ENCODE measurements at regions of chr2 and their contacts with region 1.

Region 1: GRCh38 chr2:69724540-69725159 is 17.3 kb upstream of the ANXA4 start:
- DNase-seq: peak; percentile 66
- H3K27ac ChIP-seq: no peak overlapping the region
- CTCF ChIP-seq: peak; percentile 92

Region 2: GRCh38 chr2:69395866-69396265 is 328.8 kb before region 1 on chr2:
- CTCF ChIA-PET with region 1: no interaction called
- POLR2A ChIA-PET with region 1: no interaction called
- DNase-seq: no peak
- H3K27ac ChIP-seq: no peak overlapping the region
- CTCF ChIP-seq: no peak

Region 3: GRCh38 chr2:69619725-69620124 is 104.9 kb before region 1 on chr2:
- CTCF ChIA-PET with region 1: no interaction called
- POLR2A ChIA-PET with region 1: no interaction called
- DNase-seq: no peak
- H3K27ac ChIP-seq: no peak overlapping the region
- CTCF ChIP-seq: no peak

Region 4: DNA sequence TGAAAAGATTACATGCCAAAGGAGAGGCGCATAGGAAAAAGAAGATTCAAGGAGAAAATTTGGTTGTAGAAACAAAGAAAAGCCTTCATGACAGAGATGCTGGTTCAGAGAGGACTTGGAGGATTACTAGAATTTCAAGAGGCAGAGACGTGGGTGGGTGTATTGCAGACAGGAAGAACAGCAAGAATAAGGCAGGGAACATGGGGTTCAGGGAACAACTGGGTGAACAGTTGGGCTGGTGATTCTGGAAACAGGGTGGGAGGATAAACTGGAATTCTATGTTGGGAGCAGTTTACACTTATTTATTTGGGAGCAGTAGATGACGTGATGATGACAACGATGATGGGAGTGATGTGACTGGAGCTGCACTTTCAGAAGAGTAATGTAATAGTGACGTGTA is 86.4 kb after region 1 on chr2:
- CTCF ChIA-PET with region 1: interaction called, 89 read pairs
- POLR2A ChIA-PET with region 1: no interaction called
- DNase-seq: no peak
- H3K27ac ChIP-seq: no peak overlapping the region
- CTCF ChIP-seq: no peak

Region 5: DNA sequence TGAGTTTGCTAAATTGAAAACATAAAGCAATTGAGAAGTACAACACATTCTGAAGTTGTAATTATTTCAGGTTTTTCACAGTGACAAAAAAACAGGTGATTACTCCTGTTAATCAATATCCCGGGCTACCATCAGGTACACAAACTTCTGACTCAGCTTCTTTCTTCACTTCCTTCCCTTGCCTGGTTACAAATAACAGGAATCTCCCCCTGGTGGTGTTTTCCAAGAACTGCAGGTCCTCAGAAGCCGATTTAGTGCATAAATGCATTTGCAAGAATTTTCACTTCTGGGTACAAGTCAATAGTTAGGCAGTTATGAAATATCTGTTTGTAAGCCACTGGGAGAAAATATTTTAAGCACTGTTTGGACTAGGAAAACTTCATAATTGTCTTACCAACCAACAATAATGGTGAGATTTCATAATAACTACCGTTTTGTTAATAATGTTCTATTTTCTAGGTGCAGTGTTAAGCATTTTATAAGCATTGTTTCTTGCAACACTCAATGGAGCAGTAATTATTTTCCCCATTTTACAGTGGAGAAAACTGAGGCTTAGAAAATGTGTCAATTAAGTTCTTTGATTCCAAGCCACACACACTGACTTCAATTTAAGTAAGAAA is 92.4 kb after region 1 on chr2:
- CTCF ChIA-PET with region 1: interaction called, 89 read pairs
- POLR2A ChIA-PET with region 1: no interaction called
- DNase-seq: peak; percentile 72
- H3K27ac ChIP-seq: no peak overlapping the region
- CTCF ChIP-seq: peak; percentile 87

Measured in RWPE1 (cell line).